Left ventricle myocardium inferior (tissue), 1 donor: ENCODE measurements at regions of chr12 and their contacts with region 1.

Region 1: GRCh38 chr12:17866802-17867201 is 223.2 kb downstream of the RERGL start:
- DNase-seq: no peak
- H3K4me3 ChIP-seq: no peak overlapping the region
- H3K27ac ChIP-seq: no peak overlapping the region
- H3K4me1 ChIP-seq: no peaks in the 10 kb centered on the region
- H3K27me3 ChIP-seq: no peaks in the 10 kb centered on the region
- CTCF ChIP-seq: no peak

Region 2: DNA sequence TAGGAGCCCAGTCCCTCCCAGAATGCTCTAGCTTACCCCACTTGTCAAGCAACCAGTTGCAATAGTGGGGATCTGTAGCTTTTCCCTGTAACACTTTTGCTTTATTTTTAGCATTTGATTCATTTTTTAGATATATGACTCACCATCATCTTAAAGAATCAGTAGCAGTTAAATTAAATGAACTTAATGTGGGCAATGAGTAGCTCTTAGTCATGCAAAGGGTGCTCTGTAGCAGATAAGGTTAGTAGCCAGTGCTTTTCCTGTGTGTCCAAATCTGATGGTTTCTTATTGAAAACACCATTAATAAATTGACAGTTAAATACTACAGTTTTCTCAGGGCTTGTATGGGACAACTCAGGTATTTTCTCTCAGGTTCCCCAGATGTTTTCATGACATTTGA is 88.6 kb before region 1 on chr12:
- intact Hi-C with region 1: loop called (anchors 2 kb)
- DNase-seq: no peak
- H3K4me3 ChIP-seq: no peak overlapping the region
- H3K27ac ChIP-seq: no peak overlapping the region
- H3K4me1 ChIP-seq: no peaks in the 10 kb centered on the region
- H3K27me3 ChIP-seq: no peaks in the 10 kb centered on the region
- CTCF ChIP-seq: no peak

Region 3: DNA sequence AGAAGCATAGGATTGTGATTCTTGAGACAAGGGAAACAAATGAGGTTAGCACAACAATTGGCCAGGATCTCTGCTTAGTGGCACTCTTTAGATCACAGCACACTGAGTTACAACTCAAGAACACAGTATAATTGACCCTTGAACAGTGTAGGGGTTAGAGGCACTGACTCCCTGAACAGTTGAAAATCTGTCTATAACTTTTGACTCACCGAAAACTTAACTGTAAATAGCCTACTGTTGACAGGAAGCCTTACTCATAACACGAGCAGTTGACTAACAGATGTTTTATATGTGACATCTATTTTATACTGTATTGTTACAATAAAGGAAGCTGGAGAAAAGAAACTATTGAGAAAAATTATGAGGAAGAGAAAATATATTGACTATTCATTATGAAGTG is 72.9 kb before region 1 on chr12:
- intact Hi-C with region 1: loop called (anchors 5 kb)
- DNase-seq: no peak
- H3K4me3 ChIP-seq: no peak overlapping the region
- H3K27ac ChIP-seq: no peak overlapping the region
- H3K4me1 ChIP-seq: no peaks in the 10 kb centered on the region
- H3K27me3 ChIP-seq: no peaks in the 10 kb centered on the region
- CTCF ChIP-seq: no peak